Colonic mucosa (tissue), 4 donors: ENCODE measurements at regions of chr5 and their contacts with region 1.

Region 1: GRCh38 chr5:145887976-145888574 is 15.3 kb upstream of the GRXCR2 start:
- DNase-seq: peak; percentile 80
- H3K4me3 ChIP-seq: no peak overlapping the region
- H3K27ac ChIP-seq: no peak overlapping the region
- H3K4me1 ChIP-seq: no peaks in the 10 kb centered on the region
- H3K27me3 ChIP-seq: no peaks in the 10 kb centered on the region
- CTCF ChIP-seq: peak; percentile 70

Region 2: GRCh38 chr5:145681686-145682085 is 206.4 kb before region 1 on chr5:
- intact Hi-C with region 1: loop called (anchors 5 kb)
- DNase-seq: peak; percentile 76
- H3K4me3 ChIP-seq: no peak overlapping the region
- H3K27ac ChIP-seq: no peak overlapping the region
- H3K4me1 ChIP-seq: no peaks in the 10 kb centered on the region
- H3K27me3 ChIP-seq: no peaks in the 10 kb centered on the region
- CTCF ChIP-seq: peak; percentile 60

Region 3: DNA sequence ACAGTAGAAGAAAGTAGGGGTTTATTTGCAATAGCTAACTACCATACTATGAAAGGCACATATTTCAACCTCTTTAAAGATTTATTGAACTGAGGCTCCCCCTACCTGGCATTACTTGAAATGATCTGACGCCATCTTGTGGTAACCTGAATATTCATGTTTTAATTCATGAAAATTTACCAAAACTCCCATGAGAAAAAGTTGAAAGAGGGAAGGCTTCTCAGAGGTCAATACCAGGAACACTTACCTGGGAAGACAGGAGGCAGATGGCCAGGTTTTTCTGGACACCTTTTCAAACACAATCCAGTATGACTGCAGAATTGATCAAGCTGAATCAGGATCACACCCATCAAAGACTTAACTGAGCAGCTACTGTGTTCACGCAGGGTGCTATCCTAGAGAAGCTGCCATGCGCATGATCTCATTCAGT is 62.3 kb before region 1 on chr5:
- intact Hi-C with region 1: loop called (anchors 10 kb)
- DNase-seq: no peak
- H3K4me3 ChIP-seq: no peak overlapping the region
- H3K27ac ChIP-seq: no peak overlapping the region
- H3K4me1 ChIP-seq: peaks cover 3% of the 10 kb centered on the region
- H3K27me3 ChIP-seq: no peaks in the 10 kb centered on the region
- CTCF ChIP-seq: peak; percentile 47